Dendritic cell treated with granulocyte-macrophage colony-stimulating factor and Interleukin-4, amounts not matched to agents 40 ng/mL and 50 ng/mL, for 4 days (primary cell): ENCODE measurements at regions of chr5 and their contacts with region 1.

Region 1: GRCh38 chr5:177390363-177391300 is 6.4 kb downstream of the SLC34A1 start:
- H3K4me3 Mint-ChIP-seq: no peak overlapping the region
- H3K27ac Mint-ChIP-seq: peak overlapping the region; percentile 85
- H3K4me1 Mint-ChIP-seq: peaks cover 54% of the 10 kb centered on the region
- H3K27me3 Mint-ChIP-seq: peaks cover 18% of the 10 kb centered on the region

Region 2: DNA sequence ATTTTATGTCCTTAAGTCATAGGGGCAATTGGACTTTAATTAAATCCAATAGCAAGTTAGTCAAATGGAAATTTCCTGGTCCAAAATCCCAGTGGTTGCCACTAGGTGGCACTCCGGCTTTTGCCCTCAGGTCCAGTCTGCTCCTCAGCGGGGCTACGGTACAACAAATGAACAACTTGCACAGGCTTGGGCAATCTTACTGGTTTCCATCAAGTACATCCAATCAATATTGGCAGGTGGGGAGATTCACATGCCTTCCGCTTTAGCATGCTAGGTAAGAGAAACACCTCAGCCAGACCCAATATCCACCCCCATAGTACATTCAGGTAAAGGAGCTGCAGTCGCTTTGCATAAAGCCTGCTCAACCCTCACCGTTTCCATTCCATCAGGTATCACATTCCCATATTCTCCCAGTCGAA is 72.7 kb before region 1 on chr5:
- intact Hi-C with region 1: loop called (anchors 5 kb)
- H3K4me3 Mint-ChIP-seq: no peak overlapping the region
- H3K27ac Mint-ChIP-seq: no peak overlapping the region
- H3K4me1 Mint-ChIP-seq: peaks cover 48% of the 10 kb centered on the region
- H3K27me3 Mint-ChIP-seq: peaks cover 10% of the 10 kb centered on the region